Motor neuron (in vitro differentiated cells): ENCODE measurements at regions of chr5 and their contacts with region 1.

Region 1: DNA sequence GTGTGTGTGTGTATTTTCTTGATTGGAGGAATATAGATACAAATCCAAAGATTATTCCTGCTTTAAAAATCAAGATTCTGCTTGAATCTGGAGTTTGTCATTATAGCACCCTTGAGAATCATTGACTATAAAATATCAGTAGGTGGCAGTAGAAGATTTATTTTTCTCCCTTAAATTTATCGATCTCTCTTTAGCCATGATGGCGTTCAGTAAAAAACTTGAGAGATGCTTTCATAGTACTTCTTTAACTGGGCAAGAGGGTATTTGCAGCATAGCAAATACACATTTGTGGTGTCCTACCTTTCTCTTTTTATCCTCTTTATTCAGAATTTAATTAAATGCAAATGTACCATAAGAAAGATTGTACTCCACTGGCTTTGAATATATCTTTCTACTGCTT is 307.7 kb downstream of the ADGRV1 start:
- ATAC-seq: peak in 7 of 8 experiments; percentile 50 to 77 (median 62)
- H3K4me3 ChIP-seq: no peak overlapping the region
- H3K27ac ChIP-seq: no peak overlapping the region
- H3K4me1 ChIP-seq: peaks cover 0 to 8% of the 10 kb centered on the region in 2 donors

Region 2: GRCh38 chr5:89904442-89904841 is 961.9 kb before region 1 on chr5:
- in situ Hi-C with region 1: no loop called
- ATAC-seq: no peak
- H3K4me3 ChIP-seq: no peak overlapping the region
- H3K27ac ChIP-seq: no peak overlapping the region
- H3K4me1 ChIP-seq: peaks cover 0 to 5% of the 10 kb centered on the region in 2 donors

Region 3: GRCh38 chr5:90558344-90559192 is 307.8 kb before region 1 on chr5 and contains the start of gene ADGRV1:
- in situ Hi-C with region 1: no loop called
- ATAC-seq: peak; percentile 96 to 99 (median 98)
- H3K4me3 ChIP-seq: peak within 1 kb of the TSS; percentile 51 to 92 (median 70)
- H3K27ac ChIP-seq: peak within 1 kb of the TSS in 1 of 2 donors; percentile 40
- H3K4me1 ChIP-seq: peaks cover 13 to 28% of the 10 kb centered on the region in 2 donors
- total RNA-seq, gene ADGRV1: 0.87 to 92.4 (median 44.9) TPM

Region 4: GRCh38 chr5:90968319-90968718 is 102.0 kb after region 1 on chr5:
- in situ Hi-C with region 1: no loop called
- ATAC-seq: no peak
- H3K4me3 ChIP-seq: no peak overlapping the region
- H3K27ac ChIP-seq: no peak overlapping the region
- H3K4me1 ChIP-seq: no peaks in the 10 kb centered on the region

Region 5: GRCh38 chr5:91383027-91383955 is 517.0 kb after region 1 on chr5 and contains the start of gene ARRDC3:
- in situ Hi-C with region 1: loop called in 5 of 9 experiments (anchors 10 to 25 kb)
- ATAC-seq: peak; percentile 39 to 79 (median 75)
- H3K4me3 ChIP-seq: peak within 1 kb of the TSS; percentile 61 to 86 (median 75)
- H3K27ac ChIP-seq: peak within 1 kb of the TSS; percentile 92 to 95
- H3K4me1 ChIP-seq: no peaks in the 10 kb centered on the region
- total RNA-seq, gene ARRDC3: 31.5 to 316 (median 154) TPM

Region 6: GRCh38 chr5:91419571-91420537 is 553.5 kb after region 1 on chr5:
- in situ Hi-C with region 1: loop called in 3 of 9 experiments (anchors 25 kb)
- ATAC-seq: peak in 3 of 8 experiments; percentile 24 to 53 (median 41)
- H3K4me3 ChIP-seq: no peak overlapping the region
- H3K27ac ChIP-seq: no peak overlapping the region
- H3K4me1 ChIP-seq: no peaks in the 10 kb centered on the region